HCT116 (cell line): ENCODE measurements at regions of chr1 and their contacts with region 1.

Region 1: GRCh38 chr1:27044613-27045151 is 32.0 kb upstream of the TENT5B start:
- DNase-seq: peak; percentile 64
- ATAC-seq: peak; percentile 88
- H3K4me3 ChIP-seq: peak overlapping the region; percentile 37 to 39
- H3K27ac ChIP-seq: no peak overlapping the region
- H3K4me1 ChIP-seq: peaks cover 9 to 19% of the 10 kb centered on the region in 2 experiments; a peak in 3 of 4 replicates
- H3K27me3 ChIP-seq: no peaks in the 10 kb centered on the region
- CTCF ChIP-seq: peak; percentile 95 to 98 (median 97)
- POLR2A ChIP-seq: no peak
- RAD21 ChIP-seq: peak; percentile 99

Region 2: DNA sequence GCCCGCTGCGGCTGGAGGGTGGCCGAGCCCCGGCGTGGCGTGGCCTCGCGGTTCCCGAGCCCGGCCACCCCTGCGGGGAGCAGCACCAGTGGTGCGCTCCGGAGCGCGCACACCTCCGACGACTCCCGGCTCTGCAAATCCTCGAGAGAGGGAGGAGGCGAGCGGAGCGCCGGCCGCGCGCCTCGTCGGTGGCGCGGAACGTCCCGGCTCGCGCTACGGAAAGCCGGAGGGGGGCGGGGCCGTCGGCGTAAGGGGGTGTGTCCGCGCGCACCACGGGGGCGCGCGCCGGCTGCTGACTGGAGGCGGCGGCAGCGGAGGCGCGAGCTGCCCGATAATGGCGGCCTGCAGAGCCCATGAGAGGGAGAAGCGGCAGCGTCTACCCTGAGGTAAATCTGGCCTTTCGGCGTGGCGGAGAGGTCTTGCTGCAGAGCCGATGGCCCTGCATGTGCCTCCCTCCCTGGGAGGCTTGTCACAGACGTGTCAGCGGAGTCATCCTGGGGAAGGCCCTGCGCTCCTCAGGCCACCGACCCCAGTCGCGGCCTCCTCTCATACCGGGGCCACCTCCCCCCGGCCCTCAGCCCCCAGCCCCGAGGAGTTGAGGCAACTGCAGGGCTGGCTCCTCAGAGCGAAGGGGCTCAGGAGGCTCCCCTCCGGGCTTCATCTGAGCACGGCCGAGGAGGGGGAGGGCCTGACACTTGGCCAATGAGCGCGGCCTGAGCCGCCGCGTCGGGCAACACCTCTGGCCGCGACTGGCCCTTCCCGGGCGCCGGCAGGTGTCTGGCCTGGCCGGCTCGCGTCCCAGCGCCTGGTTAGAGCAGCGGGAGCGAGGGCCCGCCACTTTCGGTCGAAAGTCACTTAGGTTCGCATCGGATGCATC is 932.9 kb before region 1 on chr1 and contains the start of gene PDIK1L:
- CTCF ChIA-PET with region 1: no interaction called
- POLR2A ChIA-PET with region 1: no interaction called
- RAD21 ChIA-PET with region 1: no interaction called
- intact Hi-C with region 1: no loop called
- DNase-seq: peak; percentile 93
- ATAC-seq: peak; percentile 84
- H3K4me3 ChIP-seq: peak within 1 kb of the TSS; percentile 94 to 98
- H3K27ac ChIP-seq: peak within 1 kb of the TSS; percentile 89
- H3K4me1 ChIP-seq: peaks cover 14 to 21% of the 10 kb centered on the region in 2 experiments
- H3K27me3 ChIP-seq: no peaks in the 10 kb centered on the region
- CTCF ChIP-seq: no peak
- POLR2A ChIP-seq: peak; percentile 43
- RAD21 ChIP-seq: no peak
- total RNA-seq, gene PDIK1L: 8.8 TPM

Region 3: DNA sequence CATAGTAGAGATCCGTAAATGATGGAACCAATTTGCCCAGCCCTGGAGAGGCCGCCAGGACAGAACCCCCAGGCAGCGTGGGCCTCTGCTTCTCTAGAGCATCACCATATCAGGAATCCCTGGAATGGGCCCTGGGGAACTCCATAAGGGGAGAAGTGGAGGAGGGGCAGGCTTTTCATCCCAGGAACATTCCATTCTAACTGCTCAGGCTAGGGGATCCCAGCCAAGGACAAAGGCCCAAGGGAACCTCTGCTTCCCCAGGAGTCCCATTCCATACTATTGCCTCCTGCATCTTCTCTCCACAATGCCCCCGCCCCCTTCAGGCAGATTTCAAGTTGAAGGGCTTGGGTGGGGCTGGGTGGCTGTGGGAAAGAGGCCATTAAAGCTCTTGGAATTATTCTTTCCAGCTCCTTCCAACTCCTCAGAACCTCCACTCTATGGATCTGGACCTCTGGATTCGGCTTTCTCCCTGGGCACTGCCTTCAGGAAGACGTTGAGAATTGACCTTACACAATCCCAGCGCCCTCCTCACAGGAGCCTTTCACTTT is 45.2 kb before region 1 on chr1:
- CTCF ChIA-PET with region 1: interaction called, 44 read pairs
- POLR2A ChIA-PET with region 1: interaction called, 3 read pairs
- RAD21 ChIA-PET with region 1: no interaction called
- intact Hi-C with region 1: loop called (anchors 5 kb)
- DNase-seq: peak; percentile 83
- ATAC-seq: peak; percentile 52
- H3K4me3 ChIP-seq: peak overlapping the region in 1 of 2 experiments; percentile 28; a peak in 1 of 4 replicates
- H3K27ac ChIP-seq: peak overlapping the region; percentile 85
- H3K4me1 ChIP-seq: peaks cover 82 to 97% of the 10 kb centered on the region in 2 experiments
- H3K27me3 ChIP-seq: no peaks in the 10 kb centered on the region
- CTCF ChIP-seq: no peak
- POLR2A ChIP-seq: no peak
- RAD21 ChIP-seq: no peak

Region 4: DNA sequence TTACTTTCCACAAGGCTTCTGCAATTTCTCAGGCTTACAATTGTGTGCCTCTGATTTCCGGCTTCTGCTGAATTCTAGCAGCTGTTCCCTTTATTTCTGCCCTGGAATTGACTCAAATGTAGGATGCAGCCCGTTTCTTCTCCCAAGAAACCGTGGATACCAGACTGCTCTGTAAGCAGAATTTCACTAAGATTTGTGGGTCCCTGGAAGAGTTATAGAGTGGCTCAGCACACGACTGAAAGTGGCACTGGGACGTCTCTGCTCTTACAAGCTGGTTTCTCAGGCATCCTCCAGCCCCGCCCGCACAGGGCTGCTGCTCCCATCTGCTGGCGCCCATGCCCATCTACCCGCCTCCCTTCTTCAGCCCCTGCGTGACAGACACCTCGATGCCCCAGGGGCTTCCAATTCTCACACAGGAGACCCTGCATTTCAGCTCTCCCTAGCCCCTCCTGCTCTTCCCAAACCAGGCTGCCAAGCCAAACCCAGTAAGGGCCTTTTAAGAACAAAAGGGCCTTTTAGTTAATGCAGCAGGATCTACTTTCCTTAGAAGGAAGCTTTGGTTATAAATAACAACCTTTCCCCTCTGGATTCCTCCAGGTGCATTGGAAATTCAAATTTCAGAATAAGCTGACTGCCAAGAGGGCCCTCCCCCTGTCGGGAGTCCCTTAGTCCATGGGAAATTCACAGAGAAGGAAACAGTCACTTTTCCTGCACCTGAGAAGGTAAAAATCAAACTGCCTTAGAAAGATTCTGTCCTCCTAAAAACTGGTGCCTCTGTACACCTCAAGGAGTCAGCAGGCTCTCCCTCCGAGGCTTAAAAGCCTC is 13.3 kb after region 1 on chr1:
- CTCF ChIA-PET with region 1: interaction called, 20 read pairs
- POLR2A ChIA-PET with region 1: no interaction called
- RAD21 ChIA-PET with region 1: interaction called in 1 of 2 experiments, 3 read pairs
- intact Hi-C with region 1: no loop called
- DNase-seq: no peak
- ATAC-seq: no peak
- H3K4me3 ChIP-seq: no peak overlapping the region
- H3K27ac ChIP-seq: no peak overlapping the region
- H3K4me1 ChIP-seq: no peaks in the 10 kb centered on the region
- H3K27me3 ChIP-seq: no peaks in the 10 kb centered on the region
- CTCF ChIP-seq: no peak
- POLR2A ChIP-seq: no peak
- RAD21 ChIP-seq: no peak

Region 5: DNA sequence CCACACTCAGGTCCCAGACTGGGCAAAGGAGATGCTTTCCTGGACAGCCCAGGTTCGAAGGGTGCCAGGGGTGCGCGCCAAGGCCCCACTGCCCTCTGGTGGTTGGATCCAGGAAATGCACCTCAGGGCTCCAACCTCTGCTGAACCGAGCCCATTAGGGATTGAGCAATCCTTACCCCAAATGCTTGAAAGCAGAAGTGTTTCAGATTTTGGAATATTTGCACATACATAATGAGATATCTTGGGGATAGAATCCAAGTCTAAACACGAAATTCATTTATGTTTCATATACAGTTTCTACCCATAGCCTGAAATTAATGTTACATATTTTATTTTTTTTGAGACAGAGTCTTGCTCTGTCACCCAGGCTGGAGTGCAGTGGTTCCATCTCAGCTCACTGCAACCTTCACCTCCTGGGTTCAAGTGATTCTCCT is 52.8 kb after region 1 on chr1:
- CTCF ChIA-PET with region 1: interaction called, 219 read pairs
- POLR2A ChIA-PET with region 1: interaction called, 5 read pairs
- RAD21 ChIA-PET with region 1: interaction called, 18 read pairs
- intact Hi-C with region 1: loop called (anchors 1 kb)
- DNase-seq: peak; percentile 45
- ATAC-seq: peak; percentile 87
- H3K4me3 ChIP-seq: no peak overlapping the region
- H3K27ac ChIP-seq: no peak overlapping the region
- H3K4me1 ChIP-seq: peaks cover 9 to 29% of the 10 kb centered on the region in 2 experiments
- H3K27me3 ChIP-seq: no peaks in the 10 kb centered on the region
- CTCF ChIP-seq: peak; percentile 95 to 97 (median 96)
- POLR2A ChIP-seq: no peak
- RAD21 ChIP-seq: peak; percentile 96

Region 6: GRCh38 chr1:27392096-27392777 is 347.6 kb after region 1 on chr1 and contains the start of gene GPR3:
- CTCF ChIA-PET with region 1: interaction called, 12 read pairs
- POLR2A ChIA-PET with region 1: no interaction called
- RAD21 ChIA-PET with region 1: interaction called in 1 of 2 experiments, 3 read pairs
- intact Hi-C with region 1: loop called (anchors 2 kb)
- DNase-seq: peak; percentile 84
- ATAC-seq: peak; percentile 81
- H3K4me3 ChIP-seq: peak within 1 kb of the TSS; percentile 96 to 99
- H3K27ac ChIP-seq: peak within 1 kb of the TSS; percentile 88
- H3K4me1 ChIP-seq: peaks cover 17 to 43% of the 10 kb centered on the region in 2 experiments
- H3K27me3 ChIP-seq: no peaks in the 10 kb centered on the region
- CTCF ChIP-seq: peak; percentile 42 to 70 (median 43); a peak in 5 of 6 replicates
- POLR2A ChIP-seq: no peak
- RAD21 ChIP-seq: peak; percentile 49
- total RNA-seq, gene GPR3: 2.8 TPM